Left cardiac atrium (tissue), 4 donors: ENCODE measurements at regions of chr11 and their contacts with region 1.

Region 1: GRCh38 chr11:61851113-61851899 is 23.2 kb downstream of the FADS2 start:
- DNase-seq: peak; percentile 61
- ATAC-seq: peak; percentile 77 to 84

Region 2: GRCh38 chr11:61816736-61817455 is 34.4 kb before region 1 on chr11 and contains the start of gene FADS1:
- intact Hi-C with region 1: loop called in 1 of 2 experiments (anchors 5 kb)
- DNase-seq: peak; percentile 94
- ATAC-seq: peak; percentile 68 to 72
- total RNA-seq, gene FADS1: 44.9 to 54.1 TPM

Region 3: GRCh38 chr11:62280452-62280851 is 429.1 kb after region 1 on chr11:
- intact Hi-C with region 1: no loop called
- DNase-seq: no peak
- ATAC-seq: no peak